Heart right ventricle (tissue), 16 donors: ENCODE measurements at regions of chr10 and their contacts with region 1.

Region 1: DNA sequence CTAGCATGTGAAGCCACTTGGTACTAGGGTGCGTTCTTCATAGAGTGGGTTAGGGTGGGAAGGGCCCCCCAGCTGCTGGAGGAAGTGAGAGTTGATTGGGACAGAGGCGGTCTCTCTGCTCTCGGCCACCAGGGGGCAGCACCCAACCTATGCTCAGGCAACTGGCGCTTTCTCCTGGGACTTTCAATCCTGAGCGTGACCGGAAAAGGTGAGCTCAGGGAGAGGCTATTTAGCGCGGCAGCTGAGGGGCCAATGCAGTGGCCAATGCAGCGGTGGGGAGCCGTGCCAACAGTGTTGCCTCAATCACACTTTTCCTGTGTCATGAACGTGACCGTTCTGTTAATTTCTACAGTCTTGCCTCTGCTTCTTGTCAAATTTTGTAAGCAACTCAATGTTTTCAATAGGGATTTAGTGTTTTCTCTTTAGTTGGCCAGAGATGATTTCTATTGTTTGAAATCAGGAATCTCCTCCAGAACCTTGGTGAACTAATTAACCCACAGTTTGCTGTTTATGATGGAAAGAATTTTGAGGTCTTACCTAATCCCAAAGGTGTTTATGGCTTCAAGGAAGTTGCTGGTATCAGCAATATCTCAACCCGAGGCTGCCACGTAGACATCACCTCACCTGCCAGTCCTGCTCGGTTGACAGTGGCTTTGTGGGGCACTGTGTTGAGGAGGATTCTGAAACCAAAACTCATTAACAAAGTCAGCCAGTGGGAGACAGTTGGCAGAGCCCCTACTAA is 67.9 kb upstream of the PDZD8 start:
- DNase-seq: peak; percentile 74 to 76
- ATAC-seq: peak; percentile 35 to 94 (median 73)
- H3K4me3 ChIP-seq: peak overlapping the region in 3 of 10 donors; percentile 21 to 33 (median 24)
- H3K27ac ChIP-seq: no peak overlapping the region
- H3K4me1 ChIP-seq: peaks cover 0 to 16% (median 3%) of the 10 kb centered on the region in 9 donors
- H3K27me3 ChIP-seq: peaks cover 0 to 23% (median 8%) of the 10 kb centered on the region in 7 donors
- CTCF ChIP-seq: peak; percentile 57 to 95 (median 87)

Region 2: DNA sequence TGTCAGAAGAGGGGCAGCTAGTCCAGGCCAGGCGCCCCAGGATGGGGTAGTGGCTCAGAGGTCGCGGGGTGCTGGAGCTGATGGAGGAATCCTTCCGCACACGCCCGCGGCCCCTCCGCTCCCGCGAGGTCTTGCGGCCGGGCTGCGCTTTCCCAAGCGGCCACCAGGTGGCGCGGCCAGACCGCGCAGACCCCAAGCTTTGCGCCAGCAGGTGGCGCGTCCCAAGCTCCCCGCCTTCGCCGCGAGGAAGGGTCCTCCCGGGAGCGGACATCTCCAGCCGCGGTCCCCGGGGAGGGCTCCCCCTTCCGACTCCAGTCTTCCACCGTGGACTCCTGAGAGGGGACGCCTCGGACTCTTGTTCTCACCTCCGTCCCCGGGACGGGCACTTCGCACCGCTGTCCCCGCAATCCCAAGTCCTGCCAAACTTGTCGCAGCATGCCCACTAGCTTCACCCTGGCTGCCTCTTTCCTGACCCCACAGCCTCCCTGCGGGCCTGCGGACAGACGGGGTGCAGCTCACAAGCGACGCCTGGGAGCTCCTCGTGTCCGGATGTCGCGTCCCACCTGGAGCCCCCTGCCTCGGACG is 226.4 kb before region 1 on chr10:
- intact Hi-C with region 1: loop called in 2 of 10 experiments (anchors 10 kb)
- DNase-seq: peak; percentile 34 to 69
- ATAC-seq: peak; percentile 72 to 94 (median 86)
- H3K4me3 ChIP-seq: peak overlapping the region in 9 of 10 donors; percentile 22 to 56 (median 44)
- H3K27ac ChIP-seq: no peak overlapping the region
- H3K4me1 ChIP-seq: peaks cover 0 to 16% (median 9%) of the 10 kb centered on the region in 9 donors
- H3K27me3 ChIP-seq: peaks cover 0 to 73% (median 59%) of the 10 kb centered on the region in 7 donors
- CTCF ChIP-seq: peak; percentile 99 to 100 (median 100)

Region 3: GRCh38 chr10:117375360-117376178 is 67.5 kb before region 1 on chr10 and contains the start of gene PDZD8:
- intact Hi-C with region 1: loop called in 1 of 10 experiments (anchors 2 kb)
- DNase-seq: peak; percentile 94 to 96
- ATAC-seq: peak; percentile 97 to 99 (median 98)
- H3K4me3 ChIP-seq: peak within 1 kb of the TSS; percentile 75 to 99 (median 92)
- H3K27ac ChIP-seq: peak within 1 kb of the TSS; percentile 71 to 97 (median 94)
- H3K4me1 ChIP-seq: peaks cover 6 to 45% (median 32%) of the 10 kb centered on the region in 9 donors
- H3K27me3 ChIP-seq: peaks cover 0 to 20% (median 12%) of the 10 kb centered on the region in 7 donors
- CTCF ChIP-seq: peak in 3 of 9 donors; percentile 6 to 24 (median 15)
- total RNA-seq, gene PDZD8: 16.8 to 31.3 (median 23.1) TPM

Region 4: GRCh38 chr10:117391436-117392205 is 51.5 kb before region 1 on chr10:
- intact Hi-C with region 1: no loop called
- DNase-seq: no peak
- ATAC-seq: peak in 7 of 8 donors; percentile 11 to 67 (median 51)
- H3K4me3 ChIP-seq: no peak overlapping the region
- H3K27ac ChIP-seq: no peak overlapping the region
- H3K4me1 ChIP-seq: peaks cover 0 to 12% (median 8%) of the 10 kb centered on the region in 9 donors
- H3K27me3 ChIP-seq: peaks cover 0 to 15% (median 6%) of the 10 kb centered on the region in 7 donors
- CTCF ChIP-seq: no peak

Region 5: DNA sequence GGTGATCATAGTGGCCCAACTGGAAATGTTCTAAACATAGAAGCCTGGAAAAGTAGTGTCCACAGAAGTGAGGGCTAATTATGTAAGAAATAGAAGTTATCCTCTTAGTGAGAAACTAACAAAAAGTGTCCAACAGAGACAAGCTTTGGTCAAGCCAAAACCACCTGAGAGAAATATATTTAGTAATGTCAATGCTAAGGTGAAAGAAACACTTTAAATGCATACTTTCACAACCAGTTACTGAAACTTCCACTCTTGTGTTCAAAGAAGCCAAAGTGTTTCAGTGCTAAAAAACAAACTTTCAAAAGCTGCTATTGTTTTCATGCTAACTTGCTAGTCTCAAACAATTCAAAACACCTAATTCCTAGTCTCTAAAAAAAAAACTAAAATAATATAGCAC is 585.5 kb after region 1 on chr10:
- intact Hi-C with region 1: no loop called
- DNase-seq: no peak
- ATAC-seq: no peak
- H3K4me3 ChIP-seq: no peak overlapping the region
- H3K27ac ChIP-seq: no peak overlapping the region
- H3K4me1 ChIP-seq: no peaks in the 10 kb centered on the region
- H3K27me3 ChIP-seq: no peaks in the 10 kb centered on the region
- CTCF ChIP-seq: no peak